Activated CD4-positive, alpha-beta memory T cell treated with anti-CD3 and anti-CD28 coated beads for 36 hours (primary cell): ENCODE measurements at regions of chr19 and their contacts with region 1.

Region 1: GRCh38 chr19:57191141-57192076 is at the start of gene ZNF264:
- DNase-seq: peak; percentile 92
- H3K4me3 Mint-ChIP-seq: peak within 1 kb of the TSS; percentile 85
- H3K27ac Mint-ChIP-seq: peak within 1 kb of the TSS; percentile 85
- H3K4me1 Mint-ChIP-seq: peaks cover 29% of the 10 kb centered on the region
- H3K27me3 Mint-ChIP-seq: peaks cover 3% of the 10 kb centered on the region
- total RNA-seq, gene ZNF264: 18.9 to 20.4 TPM

Region 2: DNA sequence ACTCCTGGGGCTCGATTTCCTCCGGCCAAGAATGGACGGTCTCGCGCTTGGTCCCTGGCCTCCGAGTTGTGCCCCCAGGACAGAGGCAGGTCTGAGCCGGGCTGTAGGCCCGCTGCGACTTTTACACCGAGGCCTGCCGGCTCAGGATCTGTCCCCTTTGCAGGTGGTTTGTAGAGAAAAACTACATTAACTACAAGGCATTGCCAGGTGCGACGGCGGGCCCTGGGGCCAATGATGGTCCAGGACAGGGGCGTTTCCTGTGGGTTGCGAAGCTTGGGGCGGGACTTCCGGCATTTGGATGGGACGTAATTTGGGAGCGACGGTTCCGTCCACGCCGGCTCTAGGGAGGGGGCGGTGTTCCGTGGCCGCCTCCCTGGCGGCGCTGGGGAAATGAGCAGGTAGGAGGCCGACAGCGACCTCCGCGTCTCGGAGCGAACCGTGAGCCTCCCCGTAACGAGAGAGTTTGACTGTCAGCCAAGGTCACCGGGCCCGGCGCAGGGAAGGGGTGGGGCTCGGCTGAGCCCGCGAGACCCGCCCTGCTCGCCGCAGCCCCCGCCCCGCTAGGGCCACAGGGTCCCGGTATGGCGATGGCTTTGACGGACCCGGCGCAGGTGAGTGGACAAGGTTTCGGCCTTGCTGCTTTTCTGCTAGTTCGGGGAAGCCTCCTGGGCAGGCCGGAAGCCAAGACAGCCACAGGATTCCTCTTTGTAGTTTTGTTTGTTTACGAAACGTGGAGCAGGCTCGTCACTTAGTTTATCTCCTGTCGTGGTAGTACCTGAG is 49.1 kb after region 1 on chr19 and contains the start of gene ZNF805:
- CTCF ChIA-PET with region 1: no interaction called
- POLR2A ChIA-PET with region 1: interaction called, 6 read pairs
- intact Hi-C with region 1: loop called (anchors 1 kb)
- DNase-seq: peak; percentile 97
- H3K4me3 Mint-ChIP-seq: peak within 1 kb of the TSS; percentile 90
- H3K27ac Mint-ChIP-seq: peak within 1 kb of the TSS; percentile 89
- H3K4me1 Mint-ChIP-seq: peaks cover 24% of the 10 kb centered on the region
- H3K27me3 Mint-ChIP-seq: no peaks in the 10 kb centered on the region
- total RNA-seq, gene ZNF805: 6.9 to 7.0 TPM